Activated T-helper 2 cell treated with anti-CD3 and anti-CD28 coated beads, Interferon-gamma antibody, Interleukin-2, Interleukin-4, amounts not matched to agents 10 μg/mL and 5 μg/mL and 100 μg/mL, durations not matched to agents 14 hours and 24 hours and 36 hours (primary cell): ENCODE measurements at regions of chr17 and their contacts with region 1.

Region 1: GRCh38 chr17:55238179-55238930 is 26.4 kb upstream of the HLF start:
- DNase-seq: peak; percentile 79
- H3K4me3 Mint-ChIP-seq: peak overlapping the region; percentile 72
- H3K27ac Mint-ChIP-seq: no peak overlapping the region
- H3K4me1 Mint-ChIP-seq: peaks cover 17% of the 10 kb centered on the region
- H3K27me3 Mint-ChIP-seq: peaks cover 36% of the 10 kb centered on the region

Region 2: DNA sequence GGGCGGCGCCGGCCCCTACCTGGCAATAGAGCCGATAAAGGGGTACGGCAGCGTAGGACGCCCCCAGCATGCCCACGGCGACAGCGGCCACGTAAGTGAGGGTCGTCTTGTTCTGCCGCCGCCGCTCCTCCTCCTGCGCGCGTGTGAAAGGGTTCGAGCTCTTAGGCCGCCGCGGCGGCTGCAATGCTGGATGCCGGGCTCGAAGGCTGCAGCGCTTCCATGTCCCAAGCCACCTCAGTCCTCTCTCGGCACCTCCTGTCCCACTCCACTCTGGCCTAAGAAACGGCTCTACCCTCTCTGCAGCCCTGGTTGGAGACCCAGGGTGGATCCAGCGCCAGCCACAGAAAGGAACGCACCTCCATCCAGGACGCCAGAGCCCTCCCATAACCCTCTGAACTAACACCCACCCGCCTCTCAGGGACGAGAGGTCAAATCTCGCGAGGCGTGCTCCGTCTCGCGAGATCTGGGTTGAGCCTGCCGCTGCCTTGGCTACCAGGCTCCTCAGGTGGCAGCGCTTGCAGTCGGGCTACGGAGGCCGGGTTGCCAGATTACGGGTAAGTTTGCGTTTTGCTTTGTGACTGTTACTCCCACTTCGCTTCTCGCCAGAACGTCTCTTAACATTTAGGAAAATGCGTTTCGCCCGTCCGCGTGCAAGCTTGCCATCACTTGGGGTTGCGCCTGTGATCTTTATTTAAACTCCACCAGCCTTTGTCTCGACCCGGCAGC is 269.9 kb before region 1 on chr17 and contains the starts of genes COX11 and STXBP4:
- intact Hi-C with region 1: loop called (anchors 2 kb)
- DNase-seq: peak; percentile 93
- H3K4me3 Mint-ChIP-seq: no peak within 1 kb of the TSS
- H3K27ac Mint-ChIP-seq: no peak within 1 kb of the TSS
- H3K4me1 Mint-ChIP-seq: peaks cover 31% of the 10 kb centered on the region
- H3K27me3 Mint-ChIP-seq: no peaks in the 10 kb centered on the region
- total RNA-seq, gene COX11: 48.9 and 54.0 TPM in 2 replicates
- total RNA-seq, gene STXBP4: 7.4 and 7.6 TPM in 2 replicates

Region 3: GRCh38 chr17:55190748-55191147 is 47.6 kb before region 1 on chr17:
- intact Hi-C with region 1: no loop called
- DNase-seq: no peak
- H3K4me3 Mint-ChIP-seq: no peak overlapping the region
- H3K27ac Mint-ChIP-seq: no peak overlapping the region
- H3K4me1 Mint-ChIP-seq: no peaks in the 10 kb centered on the region
- H3K27me3 Mint-ChIP-seq: peaks cover 15% of the 10 kb centered on the region

Region 4: GRCh38 chr17:55264645-55265298 is 26.4 kb after region 1 on chr17 and contains the start of gene HLF:
- intact Hi-C with region 1: loop called (anchors 1 kb)
- DNase-seq: peak; percentile 70
- H3K4me3 Mint-ChIP-seq: peak within 1 kb of the TSS; percentile 64
- H3K27ac Mint-ChIP-seq: peak within 1 kb of the TSS; percentile 29
- H3K4me1 Mint-ChIP-seq: peaks cover 13% of the 10 kb centered on the region
- H3K27me3 Mint-ChIP-seq: peaks cover 84% of the 10 kb centered on the region
- total RNA-seq, gene HLF: 4.5 and 5.1 TPM in 2 replicates

Region 5: GRCh38 chr17:55348749-55349354 is 110.5 kb after region 1 on chr17:
- intact Hi-C with region 1: loop called (anchors 2 kb)
- DNase-seq: peak; percentile 28
- H3K4me3 Mint-ChIP-seq: no peak overlapping the region
- H3K27ac Mint-ChIP-seq: no peak overlapping the region
- H3K4me1 Mint-ChIP-seq: peaks cover 58% of the 10 kb centered on the region
- H3K27me3 Mint-ChIP-seq: peaks cover 2% of the 10 kb centered on the region